Thyroid gland (tissue), 4 donors: ENCODE measurements at regions of chr15 and their contacts with region 1.

Region 1: GRCh38 chr15:82985688-82986441 is at the start of gene RAMAC:
- DNase-seq: peak; percentile 100
- H3K4me3 ChIP-seq: peak within 1 kb of the TSS; percentile 21 to 73 (median 63)
- H3K27ac ChIP-seq: peak within 1 kb of the TSS; percentile 37 to 77 (median 73)
- H3K4me1 ChIP-seq: peaks cover 11 to 12% of the 10 kb centered on the region in 2 donors
- H3K27me3 ChIP-seq: no peaks in the 10 kb centered on the region
- CTCF ChIP-seq: peak in 1 of 6 experiments; percentile 8
- POLR2A ChIP-seq: peak; percentile 30 to 79
- total RNA-seq, gene RAMAC: 18.7 to 24.0 (median 22.0) TPM

Region 2: GRCh38 chr15:82828075-82828474 is 157.8 kb before region 1 on chr15:
- intact Hi-C with region 1: no loop called
- DNase-seq: no peak
- H3K4me3 ChIP-seq: no peak overlapping the region
- H3K27ac ChIP-seq: no peak overlapping the region
- H3K4me1 ChIP-seq: no peaks in the 10 kb centered on the region
- H3K27me3 ChIP-seq: no peaks in the 10 kb centered on the region
- CTCF ChIP-seq: no peak
- POLR2A ChIP-seq: no peak

Region 3: DNA sequence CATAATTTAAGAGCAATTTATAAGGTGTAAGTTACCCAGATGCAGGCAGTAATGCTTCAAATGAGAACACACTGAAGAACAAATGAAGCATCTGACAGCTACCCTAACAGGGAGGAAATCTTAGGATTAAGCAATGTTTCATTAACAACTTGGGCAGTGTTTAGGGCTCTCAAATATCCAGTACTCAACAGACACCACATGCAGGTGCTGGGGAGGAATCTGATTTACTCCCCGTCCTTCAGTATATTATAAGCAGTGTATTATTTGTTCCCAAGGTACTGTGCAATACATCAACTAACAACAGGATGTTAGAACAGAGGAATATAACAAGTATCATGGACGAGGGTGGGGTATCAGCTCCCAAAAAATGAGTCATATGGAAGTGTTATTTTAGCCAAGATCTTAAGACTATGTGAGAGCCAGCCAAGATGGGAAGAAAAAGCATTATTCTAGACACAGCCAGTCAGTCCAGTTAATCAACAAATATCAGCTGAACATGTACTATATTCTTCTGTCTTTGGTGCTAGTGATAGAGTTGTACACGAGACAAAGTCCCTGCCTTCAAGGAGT is 60.8 kb after region 1 on chr15:
- intact Hi-C with region 1: loop called (anchors 10 kb)
- DNase-seq: no peak
- H3K4me3 ChIP-seq: no peak overlapping the region
- H3K27ac ChIP-seq: peak overlapping the region in 2 of 3 donors; percentile 32 to 45
- H3K4me1 ChIP-seq: peaks cover 5 to 12% of the 10 kb centered on the region in 2 donors
- H3K27me3 ChIP-seq: no peaks in the 10 kb centered on the region
- CTCF ChIP-seq: no peak
- POLR2A ChIP-seq: no peak